Gastrocnemius medialis (tissue), 4 donors: ENCODE measurements at regions of chr10 and their contacts with region 1.

Region 1: DNA sequence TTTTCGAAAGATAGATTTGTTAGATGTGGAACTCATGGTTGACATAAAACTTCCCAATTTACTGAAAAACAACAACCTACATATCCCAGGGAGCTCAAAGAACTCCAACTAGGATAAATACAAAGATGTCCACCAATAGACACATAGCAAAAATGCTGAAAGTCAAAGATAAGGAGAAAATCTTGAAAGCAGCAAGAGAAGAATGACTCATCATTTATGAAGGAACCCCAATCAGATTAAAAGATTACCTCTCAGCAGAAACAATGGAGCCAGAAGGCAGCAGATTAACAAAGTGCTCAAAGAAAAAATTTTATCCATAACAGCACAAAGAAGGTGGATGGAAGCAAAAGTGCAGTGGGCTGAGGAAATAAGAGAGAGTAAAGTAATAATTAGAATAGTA is 908.6 kb downstream of the SORCS3 start:
- DNase-seq: no peak
- ATAC-seq: no peak
- H3K4me3 ChIP-seq: no peak overlapping the region
- H3K27ac ChIP-seq: no peak overlapping the region
- H3K4me1 ChIP-seq: no peaks in the 10 kb centered on the region
- H3K27me3 ChIP-seq: no peaks in the 10 kb centered on the region
- CTCF ChIP-seq: no peak
- POLR2A ChIP-seq: no peak

Region 2: DNA sequence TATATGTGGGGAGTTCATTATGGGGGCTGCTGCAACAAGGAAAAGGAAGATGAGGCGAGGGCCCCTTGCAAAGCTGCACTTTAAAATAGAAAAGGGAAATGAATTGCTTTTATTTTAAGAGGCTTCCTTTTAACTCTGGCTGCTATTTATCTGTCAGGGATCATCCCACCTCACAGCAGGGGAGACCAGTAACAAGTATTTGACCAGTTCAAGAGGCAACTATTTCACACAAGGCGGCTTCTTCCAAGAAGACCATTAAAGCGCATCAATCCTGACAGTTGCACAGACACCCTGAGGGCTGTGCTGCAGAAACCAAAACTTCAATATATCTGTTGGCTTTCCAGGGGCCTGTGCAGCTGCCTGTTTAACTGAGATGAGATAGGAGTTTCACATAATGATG is 100.6 kb after region 1 on chr10:
- in situ Hi-C with region 1: loop called in 1 of 4 experiments (anchors 25 kb)
- intact Hi-C with region 1: no loop called
- DNase-seq: no peak
- ATAC-seq: no peak
- H3K4me3 ChIP-seq: no peak overlapping the region
- H3K27ac ChIP-seq: no peak overlapping the region
- H3K4me1 ChIP-seq: no peaks in the 10 kb centered on the region
- H3K27me3 ChIP-seq: no peaks in the 10 kb centered on the region
- CTCF ChIP-seq: no peak
- POLR2A ChIP-seq: no peak